Caco-2 (cell line): ENCODE measurements at regions of chr10 and their contacts with region 1.

Region 1: GRCh38 chr10:76251841-76252671 is 820.6 kb downstream of the LRMDA start:
- DNase-seq: peak in 1 of 2 experiments; percentile 47
- H3K4me3 ChIP-seq: no peak overlapping the region
- H3K4me3 Mint-ChIP-seq: no peak overlapping the region
- H3K27ac Mint-ChIP-seq: no peak overlapping the region
- H3K4me1 ChIP-seq: no peaks in the 10 kb centered on the region
- H3K4me1 Mint-ChIP-seq: no peaks in the 10 kb centered on the region
- H3K27me3 ChIP-seq: no peaks in the 10 kb centered on the region
- H3K27me3 Mint-ChIP-seq: no peaks in the 10 kb centered on the region
- CTCF ChIP-seq: no peak

Region 2: DNA sequence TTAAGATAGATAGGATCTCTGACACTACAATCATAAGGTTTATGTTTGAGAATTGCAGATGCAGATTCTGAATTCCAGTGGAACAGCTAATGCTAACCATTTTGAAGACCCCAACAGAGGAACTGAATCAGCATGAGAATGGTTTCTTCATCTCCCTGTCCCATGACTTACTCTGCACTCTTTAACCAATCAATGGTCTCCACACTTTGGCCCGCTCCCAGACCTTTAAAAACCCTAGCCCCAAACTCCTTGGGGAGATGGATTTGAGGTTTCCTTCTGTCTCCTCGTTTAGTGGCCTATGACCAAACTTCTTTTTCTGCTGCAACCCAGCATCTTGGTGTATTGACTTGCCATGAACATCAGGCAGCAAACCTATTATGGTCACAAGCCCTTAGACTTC is 15.7 kb before region 1 on chr10:
- CTCF ChIA-PET with region 1: no interaction called
- POLR2A ChIA-PET with region 1: interaction called, 11 read pairs
- intact Hi-C with region 1: no loop called
- DNase-seq: no peak
- H3K4me3 ChIP-seq: no peak overlapping the region
- H3K4me3 Mint-ChIP-seq: no peak overlapping the region
- H3K27ac Mint-ChIP-seq: no peak overlapping the region
- H3K4me1 ChIP-seq: peaks cover 21% of the 10 kb centered on the region
- H3K4me1 Mint-ChIP-seq: peaks cover 19% of the 10 kb centered on the region
- H3K27me3 ChIP-seq: no peaks in the 10 kb centered on the region
- H3K27me3 Mint-ChIP-seq: no peaks in the 10 kb centered on the region
- CTCF ChIP-seq: no peak